GM23248 (cell line): ENCODE measurements at regions of chr1 and their contacts with region 1.

Region 1: GRCh38 chr1:93629099-93630059 is 52.3 kb downstream of the BCAR3 start:
- DNase-seq: peak; percentile 86
- H3K4me3 ChIP-seq: no peak overlapping the region
- H3K27ac ChIP-seq: peak overlapping the region; percentile 63
- H3K4me1 ChIP-seq: peaks cover 65% of the 10 kb centered on the region
- H3K27me3 ChIP-seq: no peaks in the 10 kb centered on the region

Region 2: GRCh38 chr1:93447516-93448291 is 181.7 kb before region 1 on chr1 and contains the start of gene FNBP1L:
- in situ Hi-C with region 1: loop called (anchors 10 kb)
- DNase-seq: peak; percentile 76
- H3K4me3 ChIP-seq: peak within 1 kb of the TSS; percentile 93
- H3K27ac ChIP-seq: no peak within 1 kb of the TSS
- H3K4me1 ChIP-seq: peaks cover 11% of the 10 kb centered on the region
- H3K27me3 ChIP-seq: no peaks in the 10 kb centered on the region
- total RNA-seq, gene FNBP1L: 22.4 and 22.6 TPM in 2 replicates

Region 3: DNA sequence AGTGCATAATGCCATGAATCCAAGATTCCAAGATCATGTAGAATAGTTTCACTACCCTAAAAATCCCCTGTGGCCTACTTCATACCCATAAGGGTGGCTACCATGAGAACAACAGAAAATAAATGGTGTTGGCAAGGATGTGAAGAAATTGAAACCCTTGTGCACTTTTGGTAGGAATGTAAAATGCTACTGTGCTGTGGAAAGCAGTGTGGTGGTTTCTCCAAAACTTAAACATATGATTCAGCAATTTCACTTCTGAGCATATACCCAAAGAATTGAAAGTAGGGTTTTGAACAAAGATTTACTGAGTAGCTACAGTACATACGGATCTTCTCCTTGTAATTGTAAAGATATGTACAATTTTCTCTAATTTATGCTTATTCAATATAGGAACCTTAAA is 165.4 kb before region 1 on chr1:
- in situ Hi-C with region 1: no loop called
- DNase-seq: no peak
- H3K4me3 ChIP-seq: no peak overlapping the region
- H3K27ac ChIP-seq: no peak overlapping the region
- H3K4me1 ChIP-seq: no peaks in the 10 kb centered on the region
- H3K27me3 ChIP-seq: no peaks in the 10 kb centered on the region

Region 4: GRCh38 chr1:93506126-93506525 is 123.3 kb before region 1 on chr1:
- in situ Hi-C with region 1: no loop called
- DNase-seq: peak; percentile 14
- H3K4me3 ChIP-seq: no peak overlapping the region
- H3K27ac ChIP-seq: no peak overlapping the region
- H3K4me1 ChIP-seq: no peaks in the 10 kb centered on the region
- H3K27me3 ChIP-seq: no peaks in the 10 kb centered on the region

Region 5: GRCh38 chr1:93804412-93804811 is 175.0 kb after region 1 on chr1:
- in situ Hi-C with region 1: loop called (anchors 10 kb)
- DNase-seq: peak; percentile 94
- H3K4me3 ChIP-seq: peak overlapping the region; percentile 64
- H3K27ac ChIP-seq: peak overlapping the region; percentile 74
- H3K4me1 ChIP-seq: peaks cover 43% of the 10 kb centered on the region
- H3K27me3 ChIP-seq: no peaks in the 10 kb centered on the region

Region 6: DNA sequence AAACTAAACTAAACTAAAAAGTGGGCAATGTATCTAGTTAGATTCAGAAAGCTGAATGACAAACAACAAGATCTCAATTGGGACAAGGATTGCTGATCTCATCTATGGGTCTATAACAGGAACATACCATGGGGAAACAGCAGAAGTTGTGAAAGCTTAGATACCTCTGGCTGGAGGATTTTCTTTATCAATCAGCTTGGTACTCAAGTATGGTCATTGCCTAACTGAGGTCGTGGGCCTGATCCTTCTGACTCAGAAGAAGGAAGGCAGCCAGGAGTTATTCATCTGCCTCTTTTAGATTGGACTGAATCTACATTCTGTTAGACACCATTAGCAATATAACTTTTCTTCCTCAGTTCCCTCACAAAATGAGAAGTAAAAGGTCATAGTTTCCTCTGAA is 209.9 kb after region 1 on chr1:
- in situ Hi-C with region 1: loop called (anchors 10 kb)
- DNase-seq: peak; percentile 96
- H3K4me3 ChIP-seq: no peak overlapping the region
- H3K27ac ChIP-seq: peak overlapping the region; percentile 64
- H3K4me1 ChIP-seq: peaks cover 43% of the 10 kb centered on the region
- H3K27me3 ChIP-seq: no peaks in the 10 kb centered on the region